ENCODE measurements at regions of chr2 and their contacts with region 1.

Region 1: GRCh38 chr2:103798291-103798690 is 1036.5 kb downstream of the TMEM182 start:
- DNase-seq: no peak
- ATAC-seq: no peak
- H3K4me3 ChIP-seq: no peak overlapping the region
- H3K4me3 Mint-ChIP-seq: no peak overlapping the region
- H3K27ac ChIP-seq: no peak overlapping the region
- H3K27ac Mint-ChIP-seq: no peak overlapping the region
- H3K4me1 ChIP-seq: no peaks in the 10 kb centered on the region
- H3K4me1 Mint-ChIP-seq: no peaks in the 10 kb centered on the region
- H3K27me3 ChIP-seq: no peaks in the 10 kb centered on the region
- H3K27me3 Mint-ChIP-seq: no peaks in the 10 kb centered on the region

Region 2: GRCh38 chr2:103656558-103656957 is 141.7 kb before region 1 on chr2:
- CTCF ChIA-PET with region 1: no interaction called
- POLR2A ChIA-PET with region 1: no interaction called
- intact Hi-C with region 1: loop called in 1 of 2 experiments (anchors 5 kb)
- DNase-seq: no peak
- ATAC-seq: no peak
- H3K4me3 ChIP-seq: no peak overlapping the region
- H3K4me3 Mint-ChIP-seq: no peak overlapping the region
- H3K27ac ChIP-seq: no peak overlapping the region
- H3K27ac Mint-ChIP-seq: no peak overlapping the region
- H3K4me1 ChIP-seq: no peaks in the 10 kb centered on the region
- H3K4me1 Mint-ChIP-seq: no peaks in the 10 kb centered on the region
- H3K27me3 ChIP-seq: no peaks in the 10 kb centered on the region
- H3K27me3 Mint-ChIP-seq: no peaks in the 10 kb centered on the region